ENCODE measurements at regions of chr9 and their contacts with region 1.

Region 1: GRCh38 chr9:105712773-105713172 is 18.4 kb downstream of the TMEM38B start:
- DNase-seq: no peak

Region 2: GRCh38 chr9:105541838-105542237 is 170.9 kb before region 1 on chr9:
- intact Hi-C with region 1: no loop called
- DNase-seq: no peak

Region 3: GRCh38 chr9:105608721-105609598 is 103.8 kb before region 1 on chr9:
- intact Hi-C with region 1: loop called (anchors 5 kb)
- DNase-seq: no peak

Region 4: GRCh38 chr9:105656131-105656921 is 56.4 kb before region 1 on chr9:
- intact Hi-C with region 1: loop called (anchors 5 kb)
- DNase-seq: no peak

Region 5: GRCh38 chr9:105737205-105737604 is 24.4 kb after region 1 on chr9:
- intact Hi-C with region 1: no loop called
- DNase-seq: no peak

Region 6: GRCh38 chr9:105842023-105842644 is 129.4 kb after region 1 on chr9:
- intact Hi-C with region 1: no loop called
- DNase-seq: no peak

Region 7: DNA sequence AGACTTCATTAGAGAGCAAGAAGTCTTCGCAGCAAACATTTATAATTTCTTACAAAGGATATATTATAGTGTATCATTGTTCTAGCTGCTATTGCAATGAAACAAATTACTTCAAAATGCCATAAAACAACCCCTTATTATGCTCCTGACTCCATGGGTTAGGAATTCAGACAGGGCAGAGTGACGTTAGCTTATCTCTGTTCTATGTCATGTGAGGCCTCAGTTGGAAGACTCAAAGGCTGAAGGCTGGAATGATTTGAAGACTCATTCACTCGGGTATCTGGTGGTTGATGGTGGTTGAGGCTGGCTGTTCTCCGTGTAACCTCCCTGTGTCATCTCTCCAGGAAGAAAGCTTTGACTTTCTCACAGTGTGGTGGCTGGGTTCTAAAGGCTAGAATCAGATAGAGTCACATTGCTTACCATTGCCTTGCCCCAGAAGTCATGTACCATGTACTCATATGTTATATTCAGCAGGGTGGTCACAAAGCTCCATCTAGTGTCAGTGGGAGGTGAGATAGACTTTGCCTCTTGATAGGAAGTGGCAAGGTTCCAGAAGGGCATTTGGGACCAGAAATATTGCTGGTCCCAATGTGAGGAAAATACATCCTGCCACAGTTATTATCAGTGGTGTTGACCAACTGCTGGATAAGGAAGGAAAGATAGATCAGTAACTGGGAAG is 208.4 kb after region 1 on chr9:
- intact Hi-C with region 1: no loop called
- DNase-seq: no peak